PC-9 (cell line): ENCODE measurements at regions of chrX and their contacts with region 1.

Region 1: GRCh38 chrX:48761674-48762471 is at the start of gene GLOD5:
- DNase-seq: peak; percentile 74
- H3K4me3 ChIP-seq: peak within 1 kb of the TSS; percentile 24; the same call in 1 of the 2 replicates
- H3K27ac ChIP-seq: peak within 1 kb of the TSS; percentile 53
- H3K4me1 ChIP-seq: 0 out of 2 replicates have a peak, but pooled peaks cover 5% of the 10 kb centered on the region
- H3K27me3 ChIP-seq: no peaks in the 10 kb centered on the region
- CTCF ChIP-seq: peak; percentile 53
- total RNA-seq, gene GLOD5: not detected in 2 replicates

Region 2: GRCh38 chrX:48357681-48358080 is 404.2 kb before region 1 on chrX:
- CTCF ChIA-PET with region 1: no interaction called
- POLR2A ChIA-PET with region 1: no interaction called
- intact Hi-C with region 1: no loop called
- DNase-seq: no peak
- H3K4me3 ChIP-seq: no peak overlapping the region
- H3K27ac ChIP-seq: no peak overlapping the region
- H3K4me1 ChIP-seq: no peaks in the 10 kb centered on the region
- H3K27me3 ChIP-seq: no peaks in the 10 kb centered on the region
- CTCF ChIP-seq: no peak

Region 3: DNA sequence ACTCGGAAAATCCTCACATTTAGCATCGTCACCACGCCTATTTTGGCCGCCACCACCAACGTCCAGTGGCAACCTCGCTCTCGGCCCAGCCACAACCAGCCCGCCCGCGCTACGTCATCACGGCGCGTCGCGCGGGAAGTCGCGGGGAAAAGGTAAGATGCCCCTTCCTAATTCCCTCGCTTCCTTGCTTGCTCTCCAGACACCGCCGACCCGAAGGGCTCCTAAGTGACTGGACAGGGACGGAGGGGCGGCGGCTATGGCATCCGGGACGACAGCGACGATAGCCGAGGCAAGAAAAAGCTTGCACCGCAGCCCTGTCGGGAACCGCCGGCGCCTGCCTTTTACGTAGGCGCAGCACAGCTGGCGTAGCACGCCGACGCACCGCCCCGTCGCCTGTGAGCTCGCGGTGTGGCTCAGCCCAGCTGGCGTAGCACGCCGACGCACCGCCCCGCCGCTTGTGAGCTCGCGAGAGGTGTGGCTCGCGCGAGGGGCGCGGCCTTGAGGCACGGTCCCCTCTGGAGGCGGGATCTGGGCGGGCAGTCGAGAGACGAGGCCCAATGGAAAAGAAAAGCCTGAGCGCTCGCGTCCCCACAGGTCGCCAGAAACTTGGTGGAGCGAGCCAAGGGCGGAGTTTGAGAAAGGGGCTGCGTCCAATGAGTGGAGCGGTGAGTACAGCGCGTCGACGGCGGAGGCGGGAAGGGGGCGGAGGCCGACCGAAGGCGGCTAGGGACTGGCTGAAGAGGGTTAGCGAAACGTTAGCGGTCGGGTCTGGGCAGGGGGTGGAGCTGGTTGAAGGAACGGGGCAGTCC is 39.6 kb after region 1 on chrX and contains the start of gene HDAC6:
- CTCF ChIA-PET with region 1: no interaction called
- POLR2A ChIA-PET with region 1: no interaction called
- intact Hi-C with region 1: loop called (anchors 1 kb)
- DNase-seq: peak; percentile 88 to 90
- H3K4me3 ChIP-seq: peak within 1 kb of the TSS; percentile 58; the same call in 1 of the 2 replicates
- H3K27ac ChIP-seq: peak within 1 kb of the TSS; percentile 87
- H3K4me1 ChIP-seq: no peaks in the 10 kb centered on the region
- H3K27me3 ChIP-seq: no peaks in the 10 kb centered on the region
- CTCF ChIP-seq: no peak
- total RNA-seq, gene HDAC6: 44.2 and 48.5 TPM in 2 replicates

Region 4: DNA sequence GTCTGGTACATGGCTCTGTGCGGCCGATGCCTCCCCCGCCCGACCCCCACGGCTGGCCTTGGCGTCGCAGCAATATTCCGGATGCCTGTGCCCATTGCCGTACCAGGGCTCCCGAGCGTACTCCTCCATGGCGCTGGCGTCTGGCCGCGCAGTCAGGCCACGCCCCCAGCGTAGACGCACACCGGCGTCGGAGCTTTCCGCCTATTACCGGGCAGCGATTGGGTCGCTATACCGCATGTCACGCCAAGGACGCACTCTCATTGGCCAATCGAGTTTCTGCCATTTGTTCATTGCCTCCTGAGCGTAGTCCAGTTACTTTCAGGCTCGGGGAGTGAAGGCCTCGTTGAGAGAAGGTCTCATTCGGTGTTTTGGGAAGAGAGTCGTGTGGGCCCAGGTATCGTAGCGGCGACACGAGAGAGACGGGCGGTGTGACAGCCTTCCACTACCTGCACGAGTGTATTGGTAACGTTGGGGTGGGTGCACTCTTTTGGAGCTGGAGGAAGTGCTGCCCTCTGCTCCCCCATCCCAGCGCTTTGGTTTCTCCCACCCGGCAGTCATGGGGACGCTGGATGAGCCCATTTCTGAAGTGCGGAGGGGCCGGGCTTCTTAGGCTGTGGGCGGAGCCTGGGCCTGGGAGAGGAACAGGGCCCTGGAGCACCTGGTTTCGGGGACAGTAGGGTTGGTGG is 135.9 kb after region 1 on chrX and contains the starts of genes PQBP1 and TIMM17B:
- CTCF ChIA-PET with region 1: no interaction called
- POLR2A ChIA-PET with region 1: no interaction called
- intact Hi-C with region 1: loop called (anchors 1 kb)
- DNase-seq: peak; percentile 77 to 86
- H3K4me3 ChIP-seq: peak within 1 kb of the TSS; percentile 59
- H3K27ac ChIP-seq: peak within 1 kb of the TSS; percentile 84
- H3K4me1 ChIP-seq: no peaks in the 10 kb centered on the region
- H3K27me3 ChIP-seq: no peaks in the 10 kb centered on the region
- CTCF ChIP-seq: no peak
- total RNA-seq, gene PQBP1: 36.4 and 39.4 TPM in 2 replicates
- total RNA-seq, gene TIMM17B: 44.9 and 54.1 TPM in 2 replicates

Region 5: DNA sequence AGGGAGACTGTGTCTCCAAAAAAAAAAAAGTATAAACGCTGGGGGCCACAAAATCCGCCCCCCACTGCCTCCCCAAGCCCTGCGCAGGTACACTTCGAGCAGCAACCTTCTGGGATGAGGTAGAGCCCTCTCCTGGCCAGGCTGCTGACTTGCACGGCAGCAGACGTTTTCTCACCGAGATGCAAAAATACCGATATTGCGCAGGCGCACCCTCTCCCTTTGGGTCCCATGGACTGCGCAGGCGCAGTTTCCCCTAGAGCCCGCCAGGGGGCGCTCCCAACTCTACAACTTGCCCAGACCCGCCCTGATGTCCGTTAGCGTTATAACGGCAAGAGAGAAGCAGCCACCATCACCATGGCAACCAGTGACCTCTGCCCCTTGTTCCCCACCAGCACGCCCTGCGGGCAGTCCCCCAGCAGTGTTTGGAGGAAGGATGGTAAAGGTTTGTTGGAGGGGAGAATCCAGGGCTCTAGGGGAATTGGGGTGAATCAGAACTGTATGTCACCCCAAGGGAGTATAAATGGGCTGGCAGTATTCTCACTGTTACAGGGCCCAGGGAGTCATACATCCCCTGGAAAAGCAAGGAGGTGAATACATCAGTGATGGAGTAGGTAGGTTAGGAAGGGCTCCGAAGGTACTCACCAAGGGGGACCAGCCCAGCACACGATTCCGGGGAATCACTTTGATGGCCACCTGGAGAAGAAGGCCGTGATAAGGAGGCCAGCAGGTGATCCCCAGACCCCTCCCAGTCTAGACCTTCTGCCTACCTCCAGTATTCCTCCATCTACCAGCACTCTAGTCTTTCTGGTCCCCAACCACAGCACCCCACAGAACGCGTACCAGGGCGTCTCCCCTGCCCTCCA is 155.5 kb after region 1 on chrX:
- CTCF ChIA-PET with region 1: no interaction called
- POLR2A ChIA-PET with region 1: no interaction called
- intact Hi-C with region 1: loop called (anchors 1 kb)
- DNase-seq: peak; percentile 70 to 75
- H3K4me3 ChIP-seq: no peak overlapping the region
- H3K27ac ChIP-seq: no peak overlapping the region
- H3K4me1 ChIP-seq: no peaks in the 10 kb centered on the region
- H3K27me3 ChIP-seq: no peaks in the 10 kb centered on the region
- CTCF ChIP-seq: peak; percentile 80

Region 6: DNA sequence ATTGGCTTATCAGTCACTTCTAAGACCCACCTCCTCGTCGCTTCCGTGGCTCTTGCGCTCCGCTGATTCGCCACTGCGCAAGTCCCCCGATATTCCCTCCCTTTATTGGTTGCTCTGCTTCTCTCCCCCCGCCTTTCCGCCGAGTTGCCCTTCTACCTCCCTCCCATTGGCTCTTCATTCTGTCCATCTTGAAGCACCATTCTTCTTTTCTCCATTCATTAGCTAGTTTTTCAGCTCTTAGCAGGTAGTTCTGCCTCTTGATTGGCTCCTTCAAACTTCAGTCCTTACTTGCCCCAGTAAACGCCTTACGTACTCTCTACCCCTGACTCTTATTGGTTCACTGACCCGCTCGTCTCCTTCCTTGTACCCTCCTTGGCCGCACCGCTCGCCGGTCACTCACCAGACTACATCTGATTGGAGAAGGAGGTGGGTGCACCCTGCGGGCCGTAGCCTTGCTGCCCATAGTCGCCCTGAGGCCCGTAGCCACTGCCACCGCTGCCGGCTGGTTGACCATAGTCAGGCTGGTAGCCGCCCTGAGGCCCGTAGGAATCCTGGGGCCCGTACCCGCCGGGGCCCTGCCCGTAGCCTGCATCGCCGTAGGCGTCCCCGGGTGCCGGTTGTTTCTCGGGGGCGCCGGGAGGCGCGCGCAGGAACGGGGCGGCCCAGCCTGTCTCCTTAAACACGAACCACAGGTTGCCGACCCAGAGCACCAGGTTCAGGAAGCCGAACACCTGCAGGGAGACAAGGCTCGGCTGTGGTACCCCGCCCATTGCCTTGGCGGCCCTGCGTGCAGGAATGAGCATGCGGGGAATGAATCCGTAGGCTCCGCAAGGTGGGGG is 429.4 kb after region 1 on chrX:
- CTCF ChIA-PET with region 1: no interaction called
- POLR2A ChIA-PET with region 1: interaction called, 10 read pairs
- intact Hi-C with region 1: no loop called
- DNase-seq: peak; percentile 79 to 95
- H3K4me3 ChIP-seq: peak overlapping the region; percentile 57; the same call in 1 of the 2 replicates
- H3K27ac ChIP-seq: 0 out of 2 replicates have a peak overlapping the region, but pooled peaks have one; percentile 23
- H3K4me1 ChIP-seq: no peaks in the 10 kb centered on the region
- H3K27me3 ChIP-seq: no peaks in the 10 kb centered on the region
- CTCF ChIP-seq: no peak

Region 7: GRCh38 chrX:49878834-49879659 is 1117.2 kb after region 1 on chrX and contains the start of gene USP27X:
- CTCF ChIA-PET with region 1: no interaction called
- POLR2A ChIA-PET with region 1: no interaction called
- intact Hi-C with region 1: loop called (anchors 5 kb)
- DNase-seq: peak; percentile 38 to 66
- H3K4me3 ChIP-seq: peak within 1 kb of the TSS; percentile 51; the same call in 1 of the 2 replicates
- H3K27ac ChIP-seq: no peak within 1 kb of the TSS
- H3K4me1 ChIP-seq: no peaks in the 10 kb centered on the region
- H3K27me3 ChIP-seq: no peaks in the 10 kb centered on the region
- CTCF ChIP-seq: peak; percentile 52; the same call in 1 of the 2 replicates
- total RNA-seq, gene USP27X: 1.1 and 1.3 TPM in 2 replicates